ENCODE measurements at regions of chr1 and their contacts with region 1.

Region 1: GRCh38 chr1:91885716-91886506 is at the start of gene TGFBR3:
- DNase-seq: peak; percentile 94
- total RNA-seq, gene TGFBR3: 12.6 TPM

Region 2: GRCh38 chr1:91569411-91570119 is 316.3 kb before region 1 on chr1:
- intact Hi-C with region 1: loop called (anchors 5 kb)
- DNase-seq: peak; percentile 90

Region 3: GRCh38 chr1:91712981-91713841 is 172.7 kb before region 1 on chr1:
- intact Hi-C with region 1: loop called (anchors 5 kb)
- DNase-seq: no peak

Region 4: DNA sequence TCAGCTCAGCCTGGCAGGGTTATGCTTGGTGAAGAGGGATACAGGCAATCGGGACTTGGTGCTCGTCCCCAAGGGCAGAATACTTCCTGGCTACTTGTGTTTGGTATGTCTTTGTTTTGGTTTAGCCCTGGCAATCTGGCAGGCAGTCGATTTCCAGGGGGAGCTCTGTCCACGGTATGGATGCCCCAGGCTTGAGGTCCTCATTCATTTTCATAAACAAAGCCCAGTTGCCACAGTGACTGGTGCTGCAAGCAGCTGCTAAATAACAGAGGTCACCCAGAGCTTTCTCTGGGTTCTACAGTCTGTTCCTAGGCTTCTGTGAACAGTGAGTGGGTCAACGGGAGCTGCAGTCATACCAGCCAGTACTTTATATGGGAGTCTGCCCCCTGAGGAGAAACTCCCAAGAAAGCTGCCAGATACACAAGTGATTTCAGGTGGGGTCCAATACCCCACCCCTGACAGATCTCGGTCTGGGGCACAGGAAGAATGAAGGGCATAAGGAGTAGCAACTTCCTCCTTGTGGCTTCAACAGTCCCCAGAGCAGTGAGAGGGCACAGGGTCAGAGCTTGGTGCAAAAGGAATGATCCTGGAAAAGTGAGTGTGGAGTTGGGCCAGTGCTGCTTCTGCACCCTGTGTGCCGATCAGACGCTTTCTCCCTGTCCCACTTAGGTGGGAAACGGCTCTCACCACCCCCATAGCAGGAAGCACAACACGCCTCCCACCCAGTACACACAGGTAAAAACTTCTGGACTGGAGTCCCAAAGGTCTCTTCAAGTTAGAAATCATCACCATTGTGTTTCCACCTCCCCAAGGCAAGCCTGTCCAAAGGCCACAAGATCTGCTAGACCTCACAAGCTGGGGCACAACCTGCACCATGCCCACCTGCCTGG is 55.4 kb before region 1 on chr1:
- intact Hi-C with region 1: loop called (anchors 5 kb)
- DNase-seq: peak; percentile 82

Region 5: GRCh38 chr1:91929250-91929649 is 43.3 kb after region 1 on chr1:
- intact Hi-C with region 1: no loop called
- DNase-seq: no peak

Measured in cardiac septum (tissue), 1 donor.